WTC11 (cell line): ENCODE measurements at regions of chr1 and their contacts with region 1.

Region 1: GRCh38 chr1:207963427-207964194 is 52.7 kb upstream of the CD34 start:
- DNase-seq: peak; percentile 87
- ATAC-seq: peak; percentile 69
- H3K4me3 Mint-ChIP-seq: peak overlapping the region; percentile 81
- H3K27ac Mint-ChIP-seq: no peak overlapping the region
- H3K4me1 Mint-ChIP-seq: peaks cover 14% of the 10 kb centered on the region
- H3K27me3 Mint-ChIP-seq: peaks cover 60% of the 10 kb centered on the region
- CTCF ChIP-seq: peak; percentile 97

Region 2: DNA sequence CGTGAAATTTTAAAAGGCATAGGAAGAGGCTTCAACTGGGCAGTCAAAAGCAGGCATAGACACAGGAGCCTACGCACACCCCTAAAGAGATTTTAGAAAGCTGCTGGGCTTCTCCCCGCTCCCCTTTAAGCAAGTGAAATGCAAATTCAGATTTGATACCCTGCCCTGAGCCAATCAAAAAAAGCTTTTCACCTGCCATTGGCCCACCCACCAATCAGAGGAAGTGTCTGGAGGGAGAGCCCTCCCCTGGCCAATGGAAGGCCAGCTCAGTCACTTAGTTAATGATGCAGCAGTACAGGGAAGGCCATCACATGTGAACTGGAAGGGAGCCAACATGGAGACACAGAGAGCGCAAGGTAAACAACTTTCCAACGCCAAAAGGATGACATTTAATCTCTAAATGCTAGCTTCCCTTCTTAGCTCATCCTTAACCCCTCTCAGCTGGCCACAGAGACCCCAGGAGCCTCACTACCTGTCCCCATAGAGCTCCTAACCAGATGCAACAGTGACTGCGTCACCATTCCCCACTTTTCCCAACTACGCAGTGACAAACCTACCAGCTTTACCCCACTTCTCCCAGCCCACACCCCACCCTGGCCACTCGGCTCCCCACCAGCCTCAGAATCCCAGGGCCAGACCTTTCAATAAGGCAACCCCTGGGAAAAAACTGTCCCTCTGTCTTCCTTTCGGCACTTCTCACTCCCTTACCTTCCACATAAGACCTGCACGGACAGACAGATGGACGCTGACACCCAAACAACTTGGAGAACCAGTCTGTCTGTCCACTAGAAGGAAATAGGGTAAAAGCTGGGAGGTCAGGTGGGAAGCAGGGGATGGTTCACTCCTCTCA is 140.8 kb before region 1 on chr1:
- CTCF ChIA-PET with region 1: interaction called, 18 read pairs
- POLR2A ChIA-PET with region 1: interaction called, 3 read pairs
- DNase-seq: no peak
- ATAC-seq: peak; percentile 62
- H3K4me3 Mint-ChIP-seq: no peak overlapping the region
- H3K27ac Mint-ChIP-seq: peak overlapping the region; percentile 12; the same call in 1 of the 2 replicates
- H3K4me1 Mint-ChIP-seq: peaks cover 19% of the 10 kb centered on the region
- H3K27me3 Mint-ChIP-seq: no peaks in the 10 kb centered on the region
- CTCF ChIP-seq: no peak

Region 3: DNA sequence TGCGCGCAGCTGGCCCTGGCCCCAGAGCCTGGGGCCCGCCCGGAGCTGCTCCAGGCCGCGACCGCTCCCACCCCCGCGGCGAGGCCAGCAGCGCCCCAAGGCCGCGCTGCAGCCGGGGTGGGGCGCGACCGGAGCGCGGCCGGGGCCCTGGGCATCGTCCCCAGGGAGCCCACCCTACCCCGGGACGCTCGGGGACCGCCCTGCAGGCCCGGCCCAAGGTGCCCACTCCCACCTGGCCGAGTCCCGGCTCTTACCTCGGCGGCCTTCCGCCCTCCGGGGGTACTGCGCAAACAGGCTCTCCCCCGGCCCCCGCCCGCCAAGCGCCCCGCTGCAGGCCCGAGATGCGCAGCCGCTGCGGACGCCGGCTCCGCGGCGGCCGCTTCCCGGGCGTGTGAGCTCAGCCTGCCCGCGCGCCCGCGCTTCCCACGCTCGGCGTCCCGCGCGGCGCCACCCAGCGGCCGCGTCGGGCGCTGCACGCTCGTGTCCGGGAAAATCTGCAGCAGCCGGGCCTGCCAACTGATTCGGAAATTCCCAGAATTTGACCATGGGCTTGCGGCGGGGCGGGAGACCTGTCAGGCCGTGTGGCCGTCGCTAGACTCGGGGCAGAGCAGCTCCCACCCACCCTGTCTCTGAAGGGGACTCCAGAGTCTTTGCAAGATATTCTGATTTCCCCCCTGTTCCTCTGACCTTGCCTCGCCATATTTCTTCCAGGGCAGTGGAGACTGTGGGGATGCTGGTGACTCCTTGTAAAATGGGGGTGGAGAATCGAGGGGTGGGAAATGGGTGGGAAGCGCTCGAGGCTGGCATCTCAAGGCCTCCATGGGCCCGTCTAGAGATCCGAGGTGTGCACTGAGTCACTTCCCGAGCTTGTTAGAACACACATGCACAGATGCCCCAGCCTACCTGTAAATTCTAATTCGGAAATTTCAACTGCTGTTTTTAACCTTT is 94.6 kb before region 1 on chr1:
- CTCF ChIA-PET with region 1: interaction called, 70 read pairs
- POLR2A ChIA-PET with region 1: no interaction called
- DNase-seq: peak; percentile 72
- ATAC-seq: peak; percentile 65
- H3K4me3 Mint-ChIP-seq: peak overlapping the region; percentile 71
- H3K27ac Mint-ChIP-seq: no peak overlapping the region
- H3K4me1 Mint-ChIP-seq: peaks cover 18% of the 10 kb centered on the region
- H3K27me3 Mint-ChIP-seq: peaks cover 28% of the 10 kb centered on the region
- CTCF ChIP-seq: peak; percentile 60

Region 4: GRCh38 chr1:207897188-207897587 is 66.4 kb before region 1 on chr1:
- CTCF ChIA-PET with region 1: interaction called, 21 read pairs
- POLR2A ChIA-PET with region 1: interaction called, 4 read pairs
- DNase-seq: no peak
- ATAC-seq: no peak
- H3K4me3 Mint-ChIP-seq: no peak overlapping the region
- H3K27ac Mint-ChIP-seq: no peak overlapping the region
- H3K4me1 Mint-ChIP-seq: no peaks in the 10 kb centered on the region
- H3K27me3 Mint-ChIP-seq: no peaks in the 10 kb centered on the region
- CTCF ChIP-seq: no peak

Region 5: GRCh38 chr1:207925210-207925609 is 38.4 kb before region 1 on chr1:
- CTCF ChIA-PET with region 1: interaction called, 13 read pairs
- POLR2A ChIA-PET with region 1: interaction called, 3 read pairs
- DNase-seq: peak; percentile 59
- ATAC-seq: peak; percentile 87
- H3K4me3 Mint-ChIP-seq: no peak overlapping the region
- H3K27ac Mint-ChIP-seq: no peak overlapping the region
- H3K4me1 Mint-ChIP-seq: peaks cover 24% of the 10 kb centered on the region
- H3K27me3 Mint-ChIP-seq: no peaks in the 10 kb centered on the region
- CTCF ChIP-seq: no peak

Region 6: GRCh38 chr1:207973898-207974568 is 10.4 kb after region 1 on chr1:
- CTCF ChIA-PET with region 1: interaction called, 10 read pairs
- POLR2A ChIA-PET with region 1: no interaction called
- DNase-seq: no peak
- ATAC-seq: no peak
- H3K4me3 Mint-ChIP-seq: no peak overlapping the region
- H3K27ac Mint-ChIP-seq: no peak overlapping the region
- H3K4me1 Mint-ChIP-seq: no peaks in the 10 kb centered on the region
- H3K27me3 Mint-ChIP-seq: no peaks in the 10 kb centered on the region; the same call in 1 of the 2 replicates
- CTCF ChIP-seq: no peak

Region 7: GRCh38 chr1:208101661-208102431 is 138.2 kb after region 1 on chr1:
- CTCF ChIA-PET with region 1: no interaction called
- POLR2A ChIA-PET with region 1: no interaction called
- DNase-seq: peak; percentile 26
- ATAC-seq: peak; percentile 79
- H3K4me3 Mint-ChIP-seq: no peak overlapping the region
- H3K27ac Mint-ChIP-seq: no peak overlapping the region
- H3K4me1 Mint-ChIP-seq: peaks cover 34% of the 10 kb centered on the region
- H3K27me3 Mint-ChIP-seq: no peaks in the 10 kb centered on the region; the same call in 1 of the 2 replicates
- CTCF ChIP-seq: no peak